PC-3 (cell line): ENCODE measurements at regions of chr4 and their contacts with region 1.

Region 1: DNA sequence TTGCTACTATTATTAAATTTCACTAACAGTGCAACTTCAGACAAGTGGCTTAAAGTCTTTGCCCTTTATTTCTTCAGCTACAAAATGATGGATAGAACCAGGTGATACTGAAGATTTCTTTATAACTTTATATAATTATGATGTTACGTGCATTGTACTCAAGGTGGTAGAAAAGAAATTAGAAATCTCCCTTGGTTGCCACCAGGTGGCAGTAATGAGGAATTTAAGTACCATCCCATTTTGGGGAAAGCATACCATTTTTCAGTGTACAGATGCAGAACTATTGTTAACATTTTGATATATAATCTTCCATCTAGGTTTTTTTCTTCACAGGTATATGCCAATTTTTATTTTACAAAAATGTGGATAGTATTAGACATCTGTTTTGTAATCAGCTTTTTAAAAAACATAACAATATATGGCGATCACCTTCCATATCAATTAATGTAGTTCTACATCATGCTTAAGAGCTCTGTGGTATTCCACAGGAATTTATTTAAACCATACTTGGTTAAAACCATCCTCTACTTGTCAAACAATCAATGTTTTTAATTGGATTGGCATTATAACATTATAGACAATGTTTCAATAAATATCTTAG is 37.7 kb upstream of the RAB33B start:
- DNase-seq: peak; percentile 34
- ATAC-seq: no peak
- H3K4me3 ChIP-seq: no peak overlapping the region
- H3K27ac ChIP-seq: no peak overlapping the region
- H3K4me1 ChIP-seq: no peaks in the 10 kb centered on the region
- H3K27me3 ChIP-seq: no peaks in the 10 kb centered on the region
- CTCF ChIP-seq: peak; percentile 66

Region 2: DNA sequence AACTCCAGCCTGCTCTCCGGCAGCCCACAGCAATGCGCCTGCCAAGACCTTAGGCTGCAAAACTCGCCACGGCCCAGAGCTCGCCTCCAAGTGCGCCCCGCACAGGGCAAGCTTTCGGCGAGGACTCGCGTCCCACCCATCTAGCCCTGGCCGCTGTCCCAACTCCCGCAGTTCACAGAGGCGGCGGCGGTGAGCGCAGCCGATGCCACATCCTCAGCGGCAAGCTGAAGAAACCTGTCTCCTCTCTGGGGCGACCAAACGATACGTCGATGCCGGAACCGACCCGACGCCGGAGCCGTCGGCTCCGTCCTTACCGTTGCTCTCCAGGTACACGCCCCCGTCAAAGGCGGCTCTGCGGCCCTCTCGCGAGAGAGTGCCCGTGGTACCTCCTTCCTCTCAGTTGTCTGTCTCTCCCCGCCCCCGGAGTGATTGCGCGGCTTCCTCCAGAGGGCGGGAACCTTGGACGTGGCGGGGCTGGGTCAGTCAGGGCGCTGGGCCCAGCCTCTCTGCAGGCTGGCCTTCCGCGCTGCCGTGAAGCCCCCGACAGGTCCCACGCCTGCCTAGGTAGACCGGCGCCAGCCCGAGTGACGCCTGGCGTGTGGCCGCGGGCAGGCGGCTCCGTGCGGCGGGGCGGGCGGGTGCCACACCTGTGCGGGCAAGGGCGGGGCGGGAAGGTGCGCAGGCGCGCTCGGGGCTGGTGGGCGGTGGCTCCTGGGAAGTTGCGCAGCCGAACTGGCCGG is 37.4 kb after region 1 on chr4:
- CTCF ChIA-PET with region 1: no interaction called
- POLR2A ChIA-PET with region 1: no interaction called
- intact Hi-C with region 1: loop called (anchors 2 kb)
- DNase-seq: peak; percentile 93
- ATAC-seq: peak; percentile 89
- H3K4me3 ChIP-seq: peak overlapping the region; percentile 99
- H3K27ac ChIP-seq: peak overlapping the region; percentile 90
- H3K4me1 ChIP-seq: peaks cover 39% of the 10 kb centered on the region
- H3K27me3 ChIP-seq: no peaks in the 10 kb centered on the region
- CTCF ChIP-seq: peak; percentile 41

Region 3: DNA sequence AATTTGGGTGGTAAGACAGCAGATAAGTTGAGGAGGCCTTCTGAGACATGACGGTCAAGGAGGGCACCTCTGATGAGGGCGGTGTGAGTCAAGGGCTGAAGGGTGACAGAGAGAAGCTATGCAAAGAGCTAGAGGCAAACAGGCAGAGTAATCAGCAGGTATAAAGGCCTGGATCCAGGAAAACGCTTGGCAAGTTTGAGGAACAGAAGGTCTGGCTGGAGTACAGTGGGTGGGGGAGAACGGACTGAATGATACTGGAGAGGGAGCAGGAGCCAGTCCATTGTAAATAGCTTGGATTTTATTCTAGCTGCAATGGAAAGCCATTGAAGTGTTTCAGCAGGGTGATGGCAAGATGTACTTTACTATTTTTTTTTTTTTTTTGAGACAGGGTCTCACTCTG is 77.0 kb after region 1 on chr4:
- CTCF ChIA-PET with region 1: no interaction called
- POLR2A ChIA-PET with region 1: no interaction called
- intact Hi-C with region 1: loop called (anchors 10 kb)
- DNase-seq: no peak
- ATAC-seq: no peak
- H3K4me3 ChIP-seq: no peak overlapping the region
- H3K27ac ChIP-seq: no peak overlapping the region
- H3K4me1 ChIP-seq: no peaks in the 10 kb centered on the region
- H3K27me3 ChIP-seq: no peaks in the 10 kb centered on the region
- CTCF ChIP-seq: no peak

Region 4: DNA sequence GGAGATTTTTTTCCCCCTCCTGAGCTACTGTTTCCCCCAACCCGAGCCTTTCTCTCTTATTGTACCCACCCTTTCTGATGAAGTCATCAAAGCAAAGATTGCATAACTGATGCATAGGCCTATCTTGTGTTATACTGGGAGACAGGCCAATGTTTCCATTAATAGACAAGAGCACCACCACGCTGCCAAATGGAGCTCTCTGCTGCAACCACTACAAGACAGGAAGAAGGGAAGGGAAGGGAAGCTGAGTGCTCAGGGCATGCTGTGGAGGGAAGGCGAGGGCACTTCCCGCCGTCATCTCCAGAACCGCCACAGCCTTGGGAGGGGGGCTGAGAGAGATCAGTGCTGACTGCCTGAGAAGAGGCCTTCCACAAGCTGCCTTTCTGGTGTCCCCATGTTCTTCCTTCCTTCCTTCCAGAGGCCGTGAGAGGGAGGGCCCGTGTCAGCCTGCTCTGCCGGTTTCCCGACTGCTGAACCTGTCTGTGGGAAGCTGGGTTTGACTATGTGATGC is 324.4 kb after region 1 on chr4:
- CTCF ChIA-PET with region 1: no interaction called
- POLR2A ChIA-PET with region 1: no interaction called
- intact Hi-C with region 1: no loop called
- DNase-seq: peak; percentile 74
- ATAC-seq: peak; percentile 80
- H3K4me3 ChIP-seq: peak overlapping the region; percentile 27; the same call in 1 of the 2 replicates
- H3K27ac ChIP-seq: peak overlapping the region; percentile 63
- H3K4me1 ChIP-seq: peaks cover 26% of the 10 kb centered on the region
- H3K27me3 ChIP-seq: no peaks in the 10 kb centered on the region
- CTCF ChIP-seq: peak; percentile 34; the same call in 1 of the 2 replicates